ENCODE measurements at regions of chr1 and their contacts with region 1.

Region 1: DNA sequence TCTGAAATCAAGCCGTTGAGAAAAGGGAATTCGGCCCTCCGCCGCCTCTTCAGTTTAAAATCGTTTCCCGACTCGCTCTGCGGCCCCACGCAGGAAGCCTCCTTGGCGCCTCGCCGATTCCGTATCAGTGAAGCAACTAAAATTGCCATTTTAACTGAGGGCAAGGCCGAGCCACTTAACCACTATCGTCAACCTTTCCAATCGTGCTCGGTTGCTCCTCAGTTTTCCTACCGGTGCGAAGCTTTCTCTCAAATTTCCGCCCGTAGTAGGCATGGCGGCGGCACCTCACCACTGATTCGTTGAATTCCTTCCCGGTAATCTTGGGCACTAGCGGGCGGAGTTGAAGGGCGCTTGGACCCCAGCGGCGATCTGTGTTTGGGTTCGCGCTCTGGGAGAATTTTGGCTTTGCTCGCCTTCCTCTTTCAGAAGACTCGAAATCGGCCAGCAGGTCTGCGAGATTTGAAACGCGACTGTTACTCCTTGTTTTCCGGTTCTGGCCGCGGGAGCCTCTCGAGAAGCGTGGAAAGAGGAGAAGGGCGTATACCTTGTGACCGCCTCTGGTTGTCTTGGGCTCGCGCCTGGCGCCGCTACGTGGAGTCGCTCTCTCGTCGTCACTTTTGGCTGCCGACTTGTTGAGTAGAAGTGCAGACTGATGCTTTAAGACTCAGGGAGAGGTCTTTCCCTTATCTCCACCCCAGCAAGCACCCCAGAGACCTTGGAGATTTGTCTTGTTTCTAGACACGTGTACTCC is at the starts of genes CENPL and DARS2:
- DNase-seq: peak; percentile 85 to 98
- H3K4me3 ChIP-seq: peak within 1 kb of the TSS; percentile 65 to 71
- H3K27ac ChIP-seq: peak within 1 kb of the TSS; percentile 90 to 96
- H3K4me1 ChIP-seq: peaks cover 0 to 5% of the 10 kb centered on the region in 2 donors
- H3K27me3 ChIP-seq: no peaks in the 10 kb centered on the region
- CTCF ChIP-seq: no peak
- total RNA-seq, gene CENPL: 0.53 TPM
- total RNA-seq, gene DARS2: 12.1 TPM

Region 2: DNA sequence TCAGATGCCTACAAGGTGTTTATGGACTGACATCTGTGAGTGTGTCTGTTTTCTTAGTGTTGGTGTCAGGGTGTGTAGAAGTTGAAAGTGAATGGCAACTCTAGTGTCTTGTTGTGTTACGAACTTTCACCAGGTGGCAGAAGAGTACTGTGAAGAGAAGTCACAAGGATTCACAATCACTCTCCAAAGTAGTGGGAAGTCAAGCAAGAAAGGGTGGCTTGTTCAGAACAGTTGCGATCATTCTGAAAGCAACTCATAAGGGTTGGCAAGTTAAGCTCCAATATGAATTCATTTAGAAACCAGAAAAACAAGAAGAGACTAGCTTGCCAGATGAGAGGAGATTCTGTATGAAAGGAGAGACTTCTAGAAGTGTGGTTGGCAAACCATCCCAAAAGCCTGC is 1079.5 kb before region 1 on chr1:
- intact Hi-C with region 1: loop called (anchors 10 kb)
- DNase-seq: no peak
- H3K4me3 ChIP-seq: no peak overlapping the region
- H3K27ac ChIP-seq: no peak overlapping the region
- H3K4me1 ChIP-seq: no peaks in the 10 kb centered on the region
- H3K27me3 ChIP-seq: no peaks in the 10 kb centered on the region
- CTCF ChIP-seq: peak; percentile 29 to 42 (median 42)

Region 3: GRCh38 chr1:173429471-173430402 is 394.8 kb before region 1 on chr1:
- intact Hi-C with region 1: loop called (anchors 1 kb)
- DNase-seq: peak; percentile 49 to 95
- H3K4me3 ChIP-seq: peak overlapping the region; percentile 34 to 46
- H3K27ac ChIP-seq: peak overlapping the region; percentile 75 to 85
- H3K4me1 ChIP-seq: peaks cover 0 to 14% of the 10 kb centered on the region in 2 donors
- H3K27me3 ChIP-seq: no peaks in the 10 kb centered on the region
- CTCF ChIP-seq: peak; percentile 48 to 69 (median 48)

Region 4: DNA sequence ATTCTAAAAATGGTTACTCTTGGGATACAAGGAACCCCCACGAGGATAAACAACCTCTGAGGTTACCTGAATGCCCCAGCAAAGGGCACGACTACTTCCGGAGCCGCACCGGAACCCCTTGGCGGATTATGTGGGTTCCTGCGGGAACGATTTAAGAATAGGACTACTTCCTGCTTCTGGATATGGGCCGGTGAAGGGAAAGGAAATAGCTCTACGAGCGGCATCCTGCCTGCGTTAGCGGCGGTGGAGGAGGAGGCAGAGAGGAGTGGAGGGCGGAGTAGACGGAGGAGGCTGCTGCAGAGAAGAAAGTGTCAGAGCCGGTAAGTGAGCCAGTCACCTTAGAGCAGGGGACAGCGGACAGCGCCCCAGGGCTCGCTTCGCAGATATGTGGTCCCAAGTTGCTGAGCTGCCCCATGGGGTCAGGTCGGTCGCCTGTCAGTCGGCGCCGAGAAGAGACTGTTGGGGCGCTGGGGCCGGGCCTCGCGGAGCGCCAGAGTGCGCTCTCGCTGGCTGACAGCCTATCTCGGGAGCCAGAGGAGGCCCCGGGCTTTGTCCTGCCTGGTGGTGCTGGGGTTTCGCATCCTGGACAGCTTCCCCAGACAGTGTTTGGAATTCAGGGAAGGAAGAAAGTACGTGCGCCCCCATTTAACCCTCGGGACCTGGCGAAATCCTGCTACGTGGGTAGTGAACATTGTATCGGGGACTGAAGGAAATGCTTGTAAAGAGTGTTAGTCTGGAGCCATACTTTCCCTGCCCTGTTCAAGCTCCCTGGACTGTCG is 109.6 kb before region 1 on chr1 and contains the start of gene KLHL20:
- intact Hi-C with region 1: loop called (anchors 5 kb)
- DNase-seq: peak; percentile 21 to 89
- H3K4me3 ChIP-seq: peak within 1 kb of the TSS; percentile 93 to 96
- H3K27ac ChIP-seq: peak within 1 kb of the TSS; percentile 92 to 94
- H3K4me1 ChIP-seq: peaks cover 0 to 14% of the 10 kb centered on the region in 2 donors
- H3K27me3 ChIP-seq: no peaks in the 10 kb centered on the region
- CTCF ChIP-seq: no peak
- total RNA-seq, gene KLHL20: 15.5 TPM

Region 5: GRCh38 chr1:173733912-173734311 is 90.6 kb before region 1 on chr1:
- intact Hi-C with region 1: no loop called
- DNase-seq: no peak
- H3K4me3 ChIP-seq: no peak overlapping the region
- H3K27ac ChIP-seq: no peak overlapping the region
- H3K4me1 ChIP-seq: no peaks in the 10 kb centered on the region
- H3K27me3 ChIP-seq: no peaks in the 10 kb centered on the region
- CTCF ChIP-seq: no peak

Region 6: GRCh38 chr1:174022080-174022975 is 197.8 kb after region 1 on chr1 and contains the start of gene RC3H1:
- intact Hi-C with region 1: loop called (anchors 1 kb)
- DNase-seq: peak; percentile 63 to 92
- H3K4me3 ChIP-seq: peak within 1 kb of the TSS; percentile 88 to 100
- H3K27ac ChIP-seq: peak within 1 kb of the TSS; percentile 90 to 94
- H3K4me1 ChIP-seq: peaks cover 19 to 22% of the 10 kb centered on the region in 2 donors
- H3K27me3 ChIP-seq: no peaks in the 10 kb centered on the region
- CTCF ChIP-seq: no peak
- total RNA-seq, gene RC3H1: 5.1 TPM

Region 7: GRCh38 chr1:174159252-174160108 is 335.0 kb after region 1 on chr1 and contains the start of gene RABGAP1L:
- intact Hi-C with region 1: loop called (anchors 2 kb)
- DNase-seq: peak; percentile 69 to 96
- H3K4me3 ChIP-seq: peak within 1 kb of the TSS; percentile 62 to 96
- H3K27ac ChIP-seq: peak within 1 kb of the TSS; percentile 82 to 92
- H3K4me1 ChIP-seq: peaks cover 0 to 7% of the 10 kb centered on the region in 2 donors
- H3K27me3 ChIP-seq: no peaks in the 10 kb centered on the region
- CTCF ChIP-seq: no peak
- total RNA-seq, gene RABGAP1L: 48.4 TPM

Measured in ascending aorta (tissue), 2 donors.